Mammary epithelial cell (primary cell): ENCODE measurements at regions of chr14 and their contacts with region 1.

Region 1: DNA sequence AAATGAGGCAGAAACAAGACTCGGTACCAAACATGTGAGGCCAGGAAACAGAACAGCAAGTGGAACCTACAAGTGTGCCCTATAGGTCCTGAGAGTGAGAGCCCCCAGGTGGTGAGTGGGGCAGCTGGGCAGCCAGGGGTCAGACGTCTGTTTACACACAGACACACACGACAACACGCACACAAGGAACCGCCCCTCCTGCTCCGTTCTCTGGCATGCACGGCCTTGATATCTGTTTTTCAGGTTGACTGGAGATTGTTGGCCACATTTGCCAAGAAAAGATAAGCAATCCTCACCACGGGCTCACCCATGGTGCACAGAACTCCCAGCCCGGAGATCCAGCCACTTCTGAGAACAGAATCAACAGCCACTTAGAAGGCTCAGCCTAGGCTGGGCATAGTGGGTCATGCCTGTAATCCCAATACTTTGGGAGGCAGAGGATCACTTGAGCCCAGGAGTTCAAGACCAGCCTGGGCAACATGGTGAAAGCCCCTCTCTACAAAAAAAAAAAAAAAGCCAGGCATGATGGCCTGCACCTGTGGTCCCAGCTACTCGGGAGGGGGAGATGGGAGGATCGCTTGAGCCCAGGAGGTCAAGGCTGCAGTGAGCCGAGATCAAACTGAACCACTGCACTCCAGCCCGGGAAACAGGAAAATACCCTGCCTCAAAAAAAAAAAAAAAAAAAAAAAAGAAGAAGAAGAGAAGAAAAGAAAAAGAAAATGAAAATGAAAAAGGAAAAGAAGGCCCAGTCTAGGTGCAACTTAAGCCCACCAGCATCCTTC is 19.4 kb upstream of the EIF5 start:
- DNase-seq: no peak
- H3K4me3 ChIP-seq: no peak overlapping the region
- H3K27ac ChIP-seq: no peak overlapping the region
- H3K4me1 ChIP-seq: no peaks in the 10 kb centered on the region
- H3K27me3 ChIP-seq: no peaks in the 10 kb centered on the region
- CTCF ChIP-seq: no peak

Region 2: DNA sequence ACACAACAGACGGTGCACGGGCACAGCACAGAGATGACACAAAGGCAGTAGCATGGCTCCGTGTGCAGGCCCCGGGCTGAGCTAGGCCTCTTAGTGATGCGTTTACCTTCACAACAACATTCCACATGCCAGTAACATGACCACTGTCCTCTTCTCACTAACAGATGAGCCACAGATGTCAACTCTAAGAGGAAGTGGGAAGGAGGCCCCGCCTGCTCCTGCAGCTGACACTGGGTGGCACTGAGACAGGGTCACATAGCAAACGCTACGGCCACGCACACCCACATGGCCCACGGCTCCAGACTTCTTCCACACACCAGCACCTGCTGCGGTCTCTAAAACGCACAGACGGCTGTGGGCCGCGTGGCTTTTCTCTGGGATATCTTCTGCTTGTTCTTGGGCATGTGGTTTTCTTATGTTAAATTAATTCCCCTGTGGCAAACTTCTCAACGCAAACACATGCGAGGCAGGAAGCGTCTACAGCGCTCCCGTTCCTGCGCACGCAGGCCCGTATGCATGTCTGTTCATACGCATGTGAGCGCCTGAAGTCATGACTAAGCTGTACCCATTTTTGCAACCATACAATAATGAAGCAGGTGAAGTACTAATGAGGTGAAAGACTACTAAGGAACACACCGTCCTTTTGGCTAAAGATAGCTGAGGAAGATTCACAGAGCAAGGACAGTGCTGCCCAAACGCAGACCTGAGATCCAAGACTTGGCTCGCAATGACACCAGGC is 365.5 kb before region 1 on chr14:
- CTCF ChIA-PET with region 1: no interaction called
- dilution Hi-C with region 1: no loop called
- in situ Hi-C with region 1: no loop called
- intact Hi-C with region 1: no loop called
- DNase-seq: no peak
- H3K4me3 ChIP-seq: no peak overlapping the region
- H3K27ac ChIP-seq: no peak overlapping the region
- H3K4me1 ChIP-seq: peaks cover 6% of the 10 kb centered on the region
- H3K27me3 ChIP-seq: no peaks in the 10 kb centered on the region
- CTCF ChIP-seq: no peak

Region 3: DNA sequence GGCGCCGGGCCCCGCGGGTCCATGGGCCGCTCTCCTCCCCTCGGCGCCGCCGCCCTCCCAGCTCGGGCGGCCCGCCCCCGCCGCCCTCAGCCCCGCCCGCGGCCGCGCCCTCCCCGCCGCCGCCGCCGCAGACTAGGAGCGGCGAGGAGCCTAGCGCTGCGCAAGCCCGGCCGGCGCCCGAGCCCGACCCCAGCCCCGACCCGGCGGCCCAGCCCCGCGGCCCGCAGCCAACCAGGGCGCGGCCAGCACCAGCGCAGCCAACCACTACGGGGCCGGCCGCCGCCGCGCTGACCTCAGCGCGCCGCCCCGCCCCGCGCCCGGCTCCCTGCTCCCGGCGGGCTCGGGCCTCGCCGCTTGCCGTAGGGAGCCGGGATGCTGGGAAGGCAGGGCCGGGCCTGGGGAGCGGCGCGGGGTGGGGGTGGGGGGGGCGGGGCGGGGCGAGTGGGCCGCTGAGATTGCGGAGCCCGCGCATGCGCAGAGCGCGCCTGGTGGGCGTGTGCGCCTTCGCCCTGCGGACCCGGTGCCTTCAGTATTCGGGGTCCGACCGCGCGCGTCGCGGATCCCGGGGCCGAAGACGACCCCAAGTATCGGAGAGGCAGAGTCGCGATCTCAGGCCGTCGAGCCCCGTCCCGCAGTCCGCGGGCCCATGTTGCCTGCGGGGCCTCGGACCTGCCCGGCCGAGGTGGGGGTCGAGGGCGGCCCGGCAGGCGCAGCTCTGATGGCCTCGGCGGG is 257.2 kb before region 1 on chr14 and contains the start of gene CDC42BPB:
- CTCF ChIA-PET with region 1: no interaction called
- dilution Hi-C with region 1: no loop called
- in situ Hi-C with region 1: no loop called
- intact Hi-C with region 1: no loop called
- DNase-seq: peak; percentile 90
- H3K4me3 ChIP-seq: peak within 1 kb of the TSS; percentile 97 to 99 (median 99)
- H3K27ac ChIP-seq: peak within 1 kb of the TSS; percentile 54
- H3K4me1 ChIP-seq: peaks cover 17% of the 10 kb centered on the region
- H3K27me3 ChIP-seq: no peaks in the 10 kb centered on the region
- CTCF ChIP-seq: no peak
- total RNA-seq, gene CDC42BPB: 73.5 to 82.5 TPM

Region 4: DNA sequence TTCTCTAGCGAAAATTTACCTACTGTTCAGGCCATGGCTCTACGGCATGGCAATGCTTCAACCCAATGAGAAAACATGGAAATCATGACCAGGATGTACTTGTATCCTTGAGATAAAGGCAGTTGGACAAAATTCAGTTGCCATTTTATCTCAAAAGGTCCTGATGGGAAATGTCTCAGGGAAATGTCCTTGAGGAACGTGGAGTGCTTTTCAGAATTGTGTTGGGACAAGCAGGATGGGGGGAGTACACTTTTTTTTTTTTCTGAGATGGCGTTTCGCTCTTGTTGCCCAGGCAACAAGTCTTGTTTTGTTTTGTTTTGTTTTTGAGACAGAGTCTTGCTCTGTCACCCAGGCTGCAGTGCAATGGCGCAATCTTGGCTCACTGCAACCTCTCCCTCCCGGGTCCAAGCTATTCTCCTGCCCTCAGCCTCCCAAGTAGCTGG is 67.5 kb before region 1 on chr14:
- CTCF ChIA-PET with region 1: no interaction called
- dilution Hi-C with region 1: loop called (anchors 5 kb)
- in situ Hi-C with region 1: no loop called
- intact Hi-C with region 1: no loop called
- DNase-seq: no peak
- H3K4me3 ChIP-seq: no peak overlapping the region
- H3K27ac ChIP-seq: no peak overlapping the region
- H3K4me1 ChIP-seq: peaks cover 6% of the 10 kb centered on the region
- H3K27me3 ChIP-seq: no peaks in the 10 kb centered on the region
- CTCF ChIP-seq: no peak